ENCODE measurements at regions of chr19 and their contacts with region 1.

Region 1: DNA sequence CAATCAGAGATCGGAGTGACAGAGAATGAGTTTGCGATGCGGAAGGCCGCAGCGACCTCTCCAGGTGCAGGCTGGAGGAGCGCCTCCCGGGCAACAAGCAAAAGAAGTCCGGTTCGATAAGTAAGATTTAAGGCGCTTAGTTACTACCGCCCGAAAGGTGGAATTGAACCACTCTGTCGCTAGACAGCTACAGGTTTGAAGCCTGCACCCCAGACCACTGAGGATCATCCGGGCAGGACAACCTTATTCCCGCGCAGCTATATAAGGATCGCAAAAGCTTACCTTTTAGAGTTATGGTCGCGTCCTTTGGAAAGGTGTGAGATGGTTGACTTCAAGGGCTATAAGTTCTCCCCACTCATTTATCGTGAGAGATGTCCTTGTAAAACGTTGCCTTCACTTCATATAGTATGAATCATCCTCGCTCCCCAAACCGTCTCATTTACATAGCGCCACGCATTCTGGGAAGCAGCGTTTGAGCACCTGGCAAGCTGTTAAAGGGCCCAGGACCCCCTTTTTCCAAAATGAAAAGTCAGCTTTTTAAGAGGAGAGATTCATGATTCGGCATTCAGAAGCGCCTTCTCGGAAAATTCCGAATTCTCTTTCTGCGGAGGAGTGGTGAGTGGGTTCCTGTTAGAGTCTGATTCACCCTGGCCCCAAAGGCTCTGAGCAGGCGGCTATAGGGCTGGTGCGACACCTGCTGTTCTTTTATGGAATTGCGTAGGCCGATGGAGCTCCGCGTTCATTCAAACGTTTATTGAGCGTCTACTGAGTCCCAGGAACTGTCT is 10.8 kb downstream of the FOSB start:
- DNase-seq: peak; percentile 44 to 93
- H3K4me3 ChIP-seq: peak overlapping the region; percentile 47 to 53
- H3K27ac ChIP-seq: peak overlapping the region; percentile 85 to 96
- H3K4me1 ChIP-seq: peaks cover 0 to 4% of the 10 kb centered on the region in 2 donors
- H3K27me3 ChIP-seq: no peaks in the 10 kb centered on the region
- CTCF ChIP-seq: peak; percentile 96 to 99 (median 97)

Region 2: DNA sequence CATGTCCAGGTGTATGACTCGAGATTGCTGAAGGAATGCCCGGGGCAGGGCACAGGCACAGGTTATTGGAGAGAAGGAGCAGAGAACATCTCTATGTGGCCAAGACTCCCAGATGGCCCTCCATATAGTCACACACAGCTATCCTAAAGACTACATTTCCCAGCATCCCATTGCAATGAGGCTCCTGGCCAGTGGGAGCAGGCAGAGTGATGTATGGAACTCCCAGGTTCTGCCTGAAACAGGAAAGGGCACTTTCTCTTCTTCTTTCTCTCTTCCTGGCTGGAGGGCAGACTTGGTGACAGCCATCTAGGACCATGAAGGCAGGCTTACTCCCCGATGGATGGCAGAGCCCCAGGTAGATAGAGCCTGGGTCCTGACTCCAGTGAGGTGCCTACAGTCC is 87.3 kb before region 1 on chr19:
- intact Hi-C with region 1: no loop called
- DNase-seq: no peak
- H3K4me3 ChIP-seq: no peak overlapping the region
- H3K27ac ChIP-seq: no peak overlapping the region
- H3K4me1 ChIP-seq: no peaks in the 10 kb centered on the region
- H3K27me3 ChIP-seq: no peaks in the 10 kb centered on the region
- CTCF ChIP-seq: no peak

Region 3: DNA sequence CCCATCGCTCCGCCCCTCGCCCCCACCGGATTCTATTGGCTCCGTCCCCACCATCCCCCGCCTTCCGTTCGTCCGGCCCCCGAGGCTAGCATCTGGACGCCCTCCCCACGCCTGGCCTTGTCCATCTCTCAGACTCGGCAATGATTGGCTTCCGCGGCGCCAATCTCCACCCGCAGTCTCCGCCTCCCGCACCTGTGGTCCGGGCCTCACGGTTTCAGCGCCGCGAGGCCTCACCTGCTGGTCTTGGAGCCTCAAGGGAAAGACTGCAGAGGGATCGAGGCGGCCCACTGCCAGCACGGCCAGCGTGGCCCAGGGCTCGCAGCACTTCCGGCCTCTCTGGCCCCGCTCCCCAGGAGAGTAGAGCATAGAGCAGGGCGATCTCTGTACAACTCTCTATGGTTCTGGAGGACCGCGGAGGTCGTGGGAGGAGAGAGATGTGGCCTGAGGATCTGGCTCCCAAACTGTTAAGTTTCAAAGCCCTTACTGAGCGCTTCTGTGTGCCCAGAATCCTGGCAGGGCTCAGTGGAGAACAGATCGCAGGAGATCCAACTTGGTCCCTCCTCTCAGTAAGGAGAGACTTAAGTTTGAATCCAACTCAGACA is 55.0 kb before region 1 on chr19 and contains the start of gene ERCC1:
- intact Hi-C with region 1: loop called (anchors 1 kb)
- DNase-seq: peak; percentile 76 to 98
- H3K4me3 ChIP-seq: peak within 1 kb of the TSS; percentile 69 to 85
- H3K27ac ChIP-seq: peak within 1 kb of the TSS; percentile 89 to 95
- H3K4me1 ChIP-seq: peaks cover 0 to 32% of the 10 kb centered on the region in 2 donors
- H3K27me3 ChIP-seq: no peaks in the 10 kb centered on the region
- CTCF ChIP-seq: no peak
- total RNA-seq, gene ERCC1: 142 TPM

Region 4: DNA sequence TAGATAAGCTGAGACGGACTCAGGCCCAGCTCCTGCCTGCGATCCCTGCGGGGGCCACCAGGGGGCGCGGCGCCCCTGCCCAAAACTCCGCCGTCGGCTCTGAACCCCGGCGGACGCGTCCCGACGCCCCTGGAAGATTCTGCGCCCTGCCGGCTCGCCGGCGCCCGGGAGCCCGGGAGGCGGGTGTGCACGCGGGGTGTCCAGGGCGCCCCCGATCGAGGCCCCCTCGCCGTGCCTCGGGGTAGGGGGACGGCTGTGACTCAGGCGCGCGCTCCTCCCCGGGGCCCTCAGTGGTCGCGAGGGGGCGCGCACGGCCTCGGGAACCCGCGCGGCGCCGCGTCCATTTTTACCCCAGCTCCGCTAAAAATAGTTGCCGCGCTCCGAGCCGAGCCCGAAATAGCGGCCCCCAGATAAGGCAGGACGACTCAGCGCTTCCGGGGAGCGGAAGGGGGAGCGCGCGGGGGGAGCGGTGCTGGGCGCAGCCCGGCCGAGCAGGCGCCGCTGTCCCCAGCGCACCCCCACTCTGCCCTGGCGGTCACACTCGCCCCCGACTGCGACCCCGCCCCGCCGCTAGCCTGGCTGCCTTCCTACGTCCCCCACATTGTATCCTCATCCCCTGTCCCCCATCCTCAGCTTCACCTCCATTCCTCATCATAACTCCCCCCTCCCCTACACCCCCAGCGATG is 38.9 kb before region 1 on chr19:
- intact Hi-C with region 1: loop called (anchors 1 kb)
- DNase-seq: peak; percentile 52 to 95
- H3K4me3 ChIP-seq: peak overlapping the region; percentile 50 to 87
- H3K27ac ChIP-seq: peak overlapping the region; percentile 97 to 99
- H3K4me1 ChIP-seq: peaks cover 5 to 22% of the 10 kb centered on the region in 2 donors
- H3K27me3 ChIP-seq: no peaks in the 10 kb centered on the region
- CTCF ChIP-seq: peak; percentile 99 to 100 (median 99)

Measured in ascending aorta (tissue), 2 donors.